Activated CD8-positive, alpha-beta memory T cell treated with anti-CD3 and anti-CD28 coated beads, Interleukin-2, amount 10 ng/mL, durations not matched to agents 7 days and 5 days (primary cell): ENCODE measurements at regions of chr11 and their contacts with region 1.

Region 1: GRCh38 chr11:63738720-63739360 is 29.7 kb downstream of the ZFTA start:
- DNase-seq: peak; percentile 70
- ATAC-seq: peak; percentile 36
- H3K4me3 Mint-ChIP-seq: no peak overlapping the region
- H3K27ac Mint-ChIP-seq: no peak overlapping the region
- H3K4me1 Mint-ChIP-seq: peaks cover 2% of the 10 kb centered on the region
- H3K27me3 Mint-ChIP-seq: no peaks in the 10 kb centered on the region

Region 2: DNA sequence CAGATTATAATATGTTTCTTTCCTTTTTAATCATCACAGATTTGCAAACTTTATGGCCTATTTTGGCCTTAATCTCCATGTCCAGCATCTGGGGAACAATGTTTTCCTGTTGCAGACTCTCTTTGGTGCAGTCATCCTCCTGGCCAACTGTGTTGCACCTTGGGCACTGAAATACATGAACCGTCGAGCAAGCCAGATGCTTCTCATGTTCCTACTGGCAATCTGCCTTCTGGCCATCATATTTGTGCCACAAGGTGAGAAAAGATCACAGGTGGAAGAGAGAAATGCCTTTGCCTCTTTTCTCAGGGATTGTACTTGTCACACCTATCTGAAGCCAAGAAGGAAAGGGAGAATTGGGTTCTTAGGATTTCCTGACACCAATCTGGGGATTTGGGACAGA is 332.4 kb before region 1 on chr11:
- CTCF ChIA-PET with region 1: no interaction called
- DNase-seq: no peak
- ATAC-seq: no peak
- H3K4me3 Mint-ChIP-seq: no peak overlapping the region
- H3K27ac Mint-ChIP-seq: no peak overlapping the region
- H3K4me1 Mint-ChIP-seq: no peaks in the 10 kb centered on the region
- H3K27me3 Mint-ChIP-seq: peaks cover 15% of the 10 kb centered on the region

Region 3: DNA sequence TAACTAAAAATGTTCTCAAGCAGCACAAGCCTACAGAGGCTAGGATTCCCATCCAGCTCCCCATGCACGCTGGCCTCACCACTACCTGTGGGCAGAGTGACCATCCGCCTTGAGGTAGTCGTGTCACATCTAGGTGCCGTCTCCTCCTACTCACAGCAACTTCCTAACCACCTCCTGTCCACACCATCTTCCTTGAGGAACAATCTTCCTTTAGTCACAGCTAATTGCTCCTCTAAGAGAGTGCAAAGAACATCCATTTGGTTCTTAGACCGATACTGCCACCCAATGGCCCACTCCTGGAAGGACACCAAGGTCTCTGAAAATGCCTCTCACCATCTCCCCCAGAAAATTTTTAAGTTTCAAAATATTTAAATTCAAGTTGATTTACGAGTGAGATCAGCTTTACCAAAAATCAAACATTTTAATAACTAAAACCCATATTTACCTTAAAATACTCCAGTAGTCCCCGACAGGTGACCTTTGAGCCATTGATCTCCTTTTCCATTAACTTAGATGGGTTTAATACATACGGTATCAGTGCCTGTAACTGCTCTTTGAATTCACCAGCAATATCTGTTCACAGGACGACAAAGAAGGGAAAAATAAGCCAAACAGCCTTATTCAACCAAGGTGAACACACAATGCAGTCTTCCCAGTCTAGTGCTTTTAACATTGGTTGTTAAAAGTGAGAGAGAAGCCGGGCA is 102.9 kb before region 1 on chr11:
- CTCF ChIA-PET with region 1: interaction called, 30 read pairs
- DNase-seq: peak; percentile 77
- ATAC-seq: peak; percentile 78
- H3K4me3 Mint-ChIP-seq: no peak overlapping the region
- H3K27ac Mint-ChIP-seq: no peak overlapping the region
- H3K4me1 Mint-ChIP-seq: peaks cover 23% of the 10 kb centered on the region
- H3K27me3 Mint-ChIP-seq: no peaks in the 10 kb centered on the region

Region 4: DNA sequence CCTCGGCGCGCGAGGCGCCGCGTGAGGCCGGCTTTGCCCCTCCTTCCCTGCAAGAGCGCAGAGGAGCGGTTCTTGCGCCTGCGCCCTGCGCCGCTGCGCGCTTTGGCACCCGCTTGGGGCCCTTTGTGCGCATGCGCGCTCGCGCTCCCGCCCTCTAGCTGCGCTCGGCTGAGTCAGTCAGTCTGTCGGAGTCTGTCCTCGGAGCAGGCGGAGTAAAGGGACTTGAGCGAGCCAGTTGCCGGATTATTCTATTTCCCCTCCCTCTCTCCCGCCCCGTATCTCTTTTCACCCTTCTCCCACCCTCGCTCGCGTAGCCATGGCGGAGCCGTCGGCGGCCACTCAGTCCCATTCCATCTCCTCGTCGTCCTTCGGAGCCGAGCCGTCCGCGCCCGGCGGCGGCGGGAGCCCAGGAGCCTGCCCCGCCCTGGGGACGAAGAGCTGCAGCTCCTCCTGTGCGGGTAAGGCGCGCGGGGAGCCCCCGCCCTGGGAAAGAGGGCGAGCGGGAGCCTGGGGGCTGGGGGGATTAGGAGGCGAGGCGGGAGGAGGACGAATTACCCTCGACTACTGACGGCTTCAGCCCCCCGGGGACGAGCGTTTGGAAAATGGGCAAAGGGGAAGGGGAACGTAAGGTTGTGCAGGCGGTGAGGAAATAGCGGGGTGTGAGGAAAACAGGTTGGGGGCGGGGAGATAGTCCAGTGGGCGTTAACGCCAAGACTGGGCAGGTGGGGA is 57.4 kb before region 1 on chr11 and contains the start of gene RTN3:
- CTCF ChIA-PET with region 1: interaction called, 16 read pairs
- DNase-seq: peak; percentile 99
- ATAC-seq: peak; percentile 95
- H3K4me3 Mint-ChIP-seq: peak within 1 kb of the TSS; percentile 93
- H3K27ac Mint-ChIP-seq: peak within 1 kb of the TSS; percentile 75
- H3K4me1 Mint-ChIP-seq: peaks cover 26% of the 10 kb centered on the region
- H3K27me3 Mint-ChIP-seq: peaks cover 4% of the 10 kb centered on the region
- total RNA-seq, gene RTN3: 55.8 to 64.1 TPM

Region 5: DNA sequence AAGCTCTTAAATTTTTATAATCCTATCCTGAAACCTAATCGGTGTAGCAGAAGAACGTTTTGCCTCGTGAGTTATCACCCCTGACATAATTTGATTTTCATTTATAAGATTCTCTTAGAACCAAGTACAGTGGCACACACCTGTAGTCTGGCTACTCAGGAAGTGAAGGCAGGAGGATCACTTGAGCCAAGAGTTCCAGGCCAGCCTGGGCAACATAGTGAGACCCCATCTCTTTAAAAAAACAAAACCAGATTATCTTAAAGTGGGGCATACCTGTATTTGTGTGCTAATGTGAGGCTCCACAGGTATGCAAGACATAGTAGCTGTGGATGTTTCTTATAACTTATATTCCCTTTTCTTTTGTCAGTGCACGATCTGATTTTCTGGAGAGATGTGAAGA is 10.8 kb after region 1 on chr11:
- CTCF ChIA-PET with region 1: interaction called, 10 read pairs
- DNase-seq: no peak
- ATAC-seq: no peak
- H3K4me3 Mint-ChIP-seq: no peak overlapping the region
- H3K27ac Mint-ChIP-seq: no peak overlapping the region
- H3K4me1 Mint-ChIP-seq: no peaks in the 10 kb centered on the region
- H3K27me3 Mint-ChIP-seq: no peaks in the 10 kb centered on the region